H1 (cell line): ENCODE measurements at regions of chr4 and their contacts with region 1.

Region 1: GRCh38 chr4:183098723-183099536 is at the start of gene WWC2:
- DNase-seq: peak; percentile 92
- H3K4me3 ChIP-seq: peak within 1 kb of the TSS; percentile 71 to 98 (median 80)
- H3K27ac ChIP-seq: peak within 1 kb of the TSS; percentile 90
- H3K4me1 ChIP-seq: peaks cover 0 to 17% (median 12%) of the 10 kb centered on the region in 4 experiments; a peak in 6 of 7 replicates
- H3K27me3 ChIP-seq: no peaks in the 10 kb centered on the region; a peak in 1 of 7 replicates
- CTCF ChIP-seq: no peak
- EP300 ChIP-seq: peak in 1 of 2 experiments; percentile 82; a peak in 1 of 3 replicates
- POLR2A ChIP-seq: peak; percentile 90 to 93
- RAD21 ChIP-seq: peak; percentile 0 to 20; a peak in 3 of 4 replicates
- total RNA-seq, gene WWC2: 135 and 138 TPM in 2 replicates

Region 2: DNA sequence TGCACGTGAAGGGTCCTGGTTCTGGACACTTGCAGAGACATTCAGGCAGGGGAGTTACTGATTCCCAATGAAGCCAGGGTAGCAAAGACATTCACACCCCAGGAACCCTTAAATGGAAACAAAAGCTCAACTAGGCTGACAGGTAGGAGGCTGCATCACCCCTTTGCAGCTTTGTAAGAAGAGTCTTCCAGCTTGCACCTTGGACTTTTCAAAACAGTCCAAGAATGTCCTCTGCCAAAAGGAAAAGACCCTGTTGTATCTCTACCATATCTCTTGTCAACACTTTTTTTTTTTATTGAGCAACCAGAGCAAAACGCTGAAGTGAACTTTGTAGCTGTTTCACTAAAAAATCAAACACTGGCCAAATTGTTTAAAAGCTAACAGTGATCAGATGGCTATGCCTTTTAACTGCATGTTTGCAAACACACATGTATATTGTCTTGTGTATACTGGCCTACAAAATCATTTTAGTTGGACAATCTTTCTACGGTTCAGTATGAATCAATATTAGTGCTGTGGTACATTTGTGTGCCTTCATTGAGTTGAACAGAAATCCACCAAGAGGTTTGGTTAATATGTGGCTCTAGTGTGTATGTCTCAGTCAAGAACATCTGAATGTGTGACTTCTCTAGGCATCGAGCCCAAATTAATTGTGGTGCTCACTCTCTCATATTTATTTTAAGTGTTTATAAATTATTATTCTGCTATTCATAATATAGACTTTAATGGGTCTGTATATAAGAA is 18.4 kb before region 1 on chr4:
- CTCF ChIA-PET with region 1: interaction called, 32 read pairs
- POLR2A ChIA-PET with region 1: interaction called, 54 read pairs
- DNase-seq: no peak
- H3K4me3 ChIP-seq: no peak overlapping the region
- H3K27ac ChIP-seq: no peak overlapping the region
- H3K4me1 ChIP-seq: peaks cover 0 to 9% (median 1%) of the 10 kb centered on the region in 4 experiments; a peak in 3 of 7 replicates
- H3K27me3 ChIP-seq: no peaks in the 10 kb centered on the region
- CTCF ChIP-seq: no peak
- EP300 ChIP-seq: no peak
- POLR2A ChIP-seq: no peak
- RAD21 ChIP-seq: no peak

Region 3: GRCh38 chr4:183124865-183125264 is 25.9 kb after region 1 on chr4:
- CTCF ChIA-PET with region 1: interaction called, 6 read pairs
- POLR2A ChIA-PET with region 1: interaction called, 12 read pairs
- DNase-seq: no peak
- H3K4me3 ChIP-seq: no peak overlapping the region
- H3K27ac ChIP-seq: no peak overlapping the region; the same call in 1 of the 2 replicates
- H3K4me1 ChIP-seq: peaks cover 0 to 6% (median 2%) of the 10 kb centered on the region in 4 experiments; a peak in 2 of 7 replicates
- H3K27me3 ChIP-seq: no peaks in the 10 kb centered on the region
- CTCF ChIP-seq: no peak
- EP300 ChIP-seq: no peak
- POLR2A ChIP-seq: no peak
- RAD21 ChIP-seq: no peak

Region 4: GRCh38 chr4:183175631-183176232 is 76.8 kb after region 1 on chr4:
- CTCF ChIA-PET with region 1: interaction called, 5 read pairs
- POLR2A ChIA-PET with region 1: interaction called, 38 read pairs
- DNase-seq: no peak
- H3K4me3 ChIP-seq: no peak overlapping the region
- H3K27ac ChIP-seq: no peak overlapping the region
- H3K4me1 ChIP-seq: peaks cover 6 to 30% (median 23%) of the 10 kb centered on the region in 4 experiments
- H3K27me3 ChIP-seq: no peaks in the 10 kb centered on the region
- CTCF ChIP-seq: no peak
- EP300 ChIP-seq: no peak
- POLR2A ChIP-seq: no peak
- RAD21 ChIP-seq: no peak

Region 5: GRCh38 chr4:183190900-183191527 is 92.1 kb after region 1 on chr4:
- CTCF ChIA-PET with region 1: no interaction called
- POLR2A ChIA-PET with region 1: interaction called, 13 read pairs
- DNase-seq: no peak
- H3K4me3 ChIP-seq: no peak overlapping the region
- H3K27ac ChIP-seq: no peak overlapping the region
- H3K4me1 ChIP-seq: peaks cover 2 to 17% (median 10%) of the 10 kb centered on the region in 4 experiments; a peak in 6 of 7 replicates
- H3K27me3 ChIP-seq: no peaks in the 10 kb centered on the region
- CTCF ChIP-seq: no peak
- EP300 ChIP-seq: no peak
- POLR2A ChIP-seq: no peak
- RAD21 ChIP-seq: no peak

Region 6: GRCh38 chr4:183249857-183250256 is 150.9 kb after region 1 on chr4:
- CTCF ChIA-PET with region 1: interaction called, 24 read pairs
- POLR2A ChIA-PET with region 1: interaction called, 17 read pairs
- DNase-seq: no peak
- H3K4me3 ChIP-seq: no peak overlapping the region
- H3K27ac ChIP-seq: no peak overlapping the region
- H3K4me1 ChIP-seq: no peaks in the 10 kb centered on the region
- H3K27me3 ChIP-seq: no peaks in the 10 kb centered on the region
- CTCF ChIP-seq: peak in 2 of 3 experiments; percentile 36 to 50; a peak in 2 of 4 replicates
- EP300 ChIP-seq: no peak
- POLR2A ChIP-seq: no peak
- RAD21 ChIP-seq: peak; percentile 74 to 76

Region 7: DNA sequence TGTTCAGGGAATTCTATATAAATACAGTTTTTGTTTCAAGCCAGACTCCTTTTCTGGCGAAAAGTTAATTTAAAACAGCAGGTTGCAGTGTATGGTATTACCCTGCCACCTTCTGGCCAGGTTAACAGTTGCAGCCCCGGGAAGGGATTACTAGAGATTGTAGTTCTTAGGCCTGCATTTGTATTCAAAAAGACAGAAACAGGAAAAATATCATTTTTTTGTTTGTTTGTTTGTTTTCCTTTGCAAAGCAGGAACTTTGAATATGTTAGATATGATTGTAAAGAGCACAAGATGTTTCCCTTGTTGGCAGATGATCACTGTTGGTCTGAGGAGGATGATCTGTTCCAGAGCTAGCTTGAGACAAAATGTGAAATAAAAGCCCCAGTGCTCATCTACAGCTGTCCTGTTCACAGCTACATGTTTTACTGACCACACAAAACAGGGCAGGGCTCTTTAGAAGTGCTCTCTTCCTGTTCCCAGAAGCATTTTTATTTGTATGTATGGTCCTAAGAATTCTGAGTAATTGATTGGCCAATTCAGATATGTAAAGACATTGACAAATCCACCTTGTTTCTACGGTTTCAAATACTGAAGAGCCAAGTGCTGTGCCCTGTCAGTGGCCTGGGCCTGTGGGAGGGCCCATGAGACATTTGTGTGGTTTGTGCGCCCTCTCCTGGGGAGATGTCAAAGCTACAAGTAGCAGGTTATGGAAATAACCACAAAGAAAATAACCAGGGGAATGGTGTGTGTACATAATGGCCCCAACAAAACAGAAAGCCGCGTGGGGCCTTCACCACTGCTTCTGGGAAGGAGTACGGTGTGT is 163.2 kb after region 1 on chr4:
- CTCF ChIA-PET with region 1: interaction called, 24 read pairs
- POLR2A ChIA-PET with region 1: interaction called, 8 read pairs
- DNase-seq: peak; percentile 38 to 89
- H3K4me3 ChIP-seq: no peak overlapping the region
- H3K27ac ChIP-seq: no peak overlapping the region
- H3K4me1 ChIP-seq: peaks cover 0 to 11% (median 2%) of the 10 kb centered on the region in 4 experiments; a peak in 3 of 7 replicates
- H3K27me3 ChIP-seq: no peaks in the 10 kb centered on the region
- CTCF ChIP-seq: peak; percentile 64 to 90 (median 86)
- EP300 ChIP-seq: no peak
- POLR2A ChIP-seq: no peak
- RAD21 ChIP-seq: peak; percentile 88 to 93

Region 8: GRCh38 chr4:183407128-183407585 is 308.2 kb after region 1 on chr4:
- CTCF ChIA-PET with region 1: no interaction called
- POLR2A ChIA-PET with region 1: no interaction called
- DNase-seq: peak; percentile 59 to 99
- H3K4me3 ChIP-seq: peak overlapping the region; percentile 24 to 51 (median 38); a peak in 7 of 8 replicates
- H3K27ac ChIP-seq: no peak overlapping the region
- H3K4me1 ChIP-seq: no peaks in the 10 kb centered on the region
- H3K27me3 ChIP-seq: no peaks in the 10 kb centered on the region
- CTCF ChIP-seq: peak; percentile 86 to 94 (median 88)
- EP300 ChIP-seq: peak in 1 of 2 experiments; percentile 45; a peak in 1 of 3 replicates
- POLR2A ChIP-seq: peak; percentile 38 to 78
- RAD21 ChIP-seq: peak; percentile 87 to 95